ENCODE measurements at regions of chr7 and their contacts with region 1.

Region 1: DNA sequence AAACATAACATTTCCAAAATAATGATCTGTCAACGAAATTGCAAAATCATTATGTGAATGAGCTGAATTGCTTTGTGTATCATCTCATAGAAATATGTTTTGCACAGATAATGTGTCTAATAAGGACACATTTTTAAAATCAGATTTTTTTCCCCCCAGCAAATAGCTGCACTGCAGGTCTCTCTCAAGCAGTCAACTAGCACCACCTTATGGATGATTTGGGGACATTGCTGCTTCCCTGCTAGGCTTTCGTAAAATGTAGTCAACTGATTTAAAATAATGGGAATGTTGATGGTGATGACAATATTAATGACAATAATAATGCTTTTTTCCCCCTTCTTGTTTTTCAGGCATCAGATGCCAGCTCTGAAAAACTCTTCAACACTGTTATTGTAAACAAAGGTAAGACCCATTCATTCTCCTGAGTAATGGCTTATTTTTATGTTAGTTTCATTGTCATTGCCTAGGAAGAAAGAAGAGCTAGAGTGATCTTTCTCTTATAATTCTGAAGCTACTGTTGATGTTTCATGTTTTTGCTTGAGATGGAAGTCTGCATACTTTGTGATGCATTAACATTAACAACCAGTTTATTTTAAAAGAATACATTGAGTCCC is 433.6 kb upstream of the GALNT17 start:
- DNase-seq: peak; percentile 20
- ATAC-seq: no peak
- H3K4me3 Mint-ChIP-seq: no peak overlapping the region
- H3K27ac Mint-ChIP-seq: no peak overlapping the region
- H3K4me1 Mint-ChIP-seq: peaks cover 15% of the 10 kb centered on the region
- H3K27me3 Mint-ChIP-seq: peaks cover 31% of the 10 kb centered on the region
- CTCF ChIP-seq: peak; percentile 89

Region 2: DNA sequence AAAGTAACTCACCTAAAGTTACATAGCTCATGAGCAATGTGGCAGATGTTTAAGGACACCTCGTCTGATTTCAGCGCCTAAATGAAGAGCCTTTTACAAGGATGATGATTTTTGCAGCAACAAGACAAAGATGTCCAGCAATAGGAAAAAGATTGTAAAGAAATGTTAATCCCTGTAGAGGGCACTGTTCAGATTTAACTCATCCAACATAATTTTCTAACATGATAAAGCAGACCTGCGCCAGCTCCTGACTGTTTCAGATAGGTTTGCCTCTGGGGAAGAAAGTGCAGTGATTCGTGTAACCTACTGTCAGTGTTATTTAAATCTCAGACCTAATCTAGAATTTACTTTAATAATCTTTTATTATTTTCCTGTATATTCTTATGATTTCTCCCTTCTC is 504.8 kb before region 1 on chr7:
- CTCF ChIA-PET with region 1: interaction called, 12 read pairs
- POLR2A ChIA-PET with region 1: no interaction called
- intact Hi-C with region 1: no loop called
- DNase-seq: peak; percentile 2
- ATAC-seq: no peak
- H3K4me3 Mint-ChIP-seq: no peak overlapping the region
- H3K27ac Mint-ChIP-seq: no peak overlapping the region
- H3K4me1 Mint-ChIP-seq: no peaks in the 10 kb centered on the region
- H3K27me3 Mint-ChIP-seq: no peaks in the 10 kb centered on the region
- CTCF ChIP-seq: peak; percentile 42

Region 3: DNA sequence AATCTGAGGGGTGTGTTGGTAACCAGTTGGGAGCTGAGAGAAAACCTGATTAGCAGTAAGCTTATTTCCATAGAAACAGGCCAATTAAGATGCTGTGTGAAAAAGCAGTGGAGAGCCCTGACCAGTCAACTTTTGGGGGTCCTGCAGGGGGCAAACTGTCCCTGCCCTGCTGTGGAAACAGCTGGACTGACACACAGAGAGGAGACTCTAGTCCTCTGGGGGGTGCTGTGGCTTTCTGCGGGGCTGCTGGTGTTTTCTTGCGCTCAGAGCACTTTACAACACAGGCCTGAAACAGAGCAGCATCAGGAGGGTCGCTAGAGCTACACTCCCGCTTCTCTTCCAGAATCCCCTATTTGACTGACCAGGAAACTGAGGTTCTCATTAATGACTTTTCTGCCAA is 113.3 kb before region 1 on chr7:
- CTCF ChIA-PET with region 1: interaction called, 10 read pairs
- POLR2A ChIA-PET with region 1: no interaction called
- intact Hi-C with region 1: loop called (anchors 5 kb)
- DNase-seq: peak; percentile 22
- ATAC-seq: no peak
- H3K4me3 Mint-ChIP-seq: no peak overlapping the region
- H3K27ac Mint-ChIP-seq: no peak overlapping the region
- H3K4me1 Mint-ChIP-seq: no peaks in the 10 kb centered on the region
- H3K27me3 Mint-ChIP-seq: no peaks in the 10 kb centered on the region
- CTCF ChIP-seq: no peak

Region 4: GRCh38 chr7:70590126-70590854 is 108.0 kb before region 1 on chr7:
- CTCF ChIA-PET with region 1: interaction called, 10 read pairs
- POLR2A ChIA-PET with region 1: no interaction called
- intact Hi-C with region 1: loop called (anchors 5 kb)
- DNase-seq: no peak
- ATAC-seq: no peak
- H3K4me3 Mint-ChIP-seq: no peak overlapping the region
- H3K27ac Mint-ChIP-seq: no peak overlapping the region
- H3K4me1 Mint-ChIP-seq: no peaks in the 10 kb centered on the region
- H3K27me3 Mint-ChIP-seq: peaks cover 7% of the 10 kb centered on the region
- CTCF ChIP-seq: no peak

Region 5: DNA sequence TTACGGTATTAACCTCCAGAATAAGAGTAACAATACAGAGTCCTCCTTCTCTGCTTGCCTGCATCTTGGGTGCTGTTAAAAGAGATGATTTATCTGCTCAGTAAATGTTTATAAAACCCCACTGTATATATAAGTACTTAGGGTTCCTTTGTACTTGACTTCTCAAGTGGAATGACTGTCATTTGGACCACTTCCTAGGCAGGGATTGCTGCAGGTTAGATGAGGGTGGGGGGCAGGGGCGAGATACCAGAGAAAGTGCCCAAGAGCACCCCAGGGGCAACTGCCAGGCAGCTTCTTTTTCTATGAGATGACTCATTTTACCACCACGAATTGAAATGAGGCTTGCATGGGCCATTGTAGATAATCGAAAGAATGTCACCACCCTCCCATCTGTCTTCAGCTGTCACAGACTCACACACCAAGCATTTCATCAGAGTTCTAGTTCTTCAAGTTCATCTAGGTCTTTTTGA is 11.7 kb after region 1 on chr7:
- CTCF ChIA-PET with region 1: interaction called, 25 read pairs
- POLR2A ChIA-PET with region 1: no interaction called
- intact Hi-C with region 1: no loop called
- DNase-seq: no peak
- ATAC-seq: no peak
- H3K4me3 Mint-ChIP-seq: no peak overlapping the region
- H3K27ac Mint-ChIP-seq: no peak overlapping the region
- H3K4me1 Mint-ChIP-seq: peaks cover 3% of the 10 kb centered on the region
- H3K27me3 Mint-ChIP-seq: no peaks in the 10 kb centered on the region
- CTCF ChIP-seq: no peak